ENCODE measurements at regions of chr5 and their contacts with region 1.

Region 1: GRCh38 chr5:73088026-73088425 is 32.3 kb upstream of the TMEM171 start:
- DNase-seq: no peak
- H3K4me3 ChIP-seq: no peak overlapping the region
- H3K27ac ChIP-seq: no peak overlapping the region
- H3K4me1 ChIP-seq: no peaks in the 10 kb centered on the region
- H3K27me3 ChIP-seq: no peaks in the 10 kb centered on the region
- CTCF ChIP-seq: no peak

Region 2: GRCh38 chr5:73170522-73170921 is 82.5 kb after region 1 on chr5:
- CTCF ChIA-PET with region 1: interaction called, 3 read pairs
- POLR2A ChIA-PET with region 1: no interaction called
- intact Hi-C with region 1: loop called (anchors 2 kb)
- DNase-seq: peak; percentile 68
- H3K4me3 ChIP-seq: no peak overlapping the region
- H3K27ac ChIP-seq: no peak overlapping the region
- H3K4me1 ChIP-seq: peaks cover 6% of the 10 kb centered on the region
- H3K27me3 ChIP-seq: no peaks in the 10 kb centered on the region
- CTCF ChIP-seq: peak; percentile 81

Region 3: DNA sequence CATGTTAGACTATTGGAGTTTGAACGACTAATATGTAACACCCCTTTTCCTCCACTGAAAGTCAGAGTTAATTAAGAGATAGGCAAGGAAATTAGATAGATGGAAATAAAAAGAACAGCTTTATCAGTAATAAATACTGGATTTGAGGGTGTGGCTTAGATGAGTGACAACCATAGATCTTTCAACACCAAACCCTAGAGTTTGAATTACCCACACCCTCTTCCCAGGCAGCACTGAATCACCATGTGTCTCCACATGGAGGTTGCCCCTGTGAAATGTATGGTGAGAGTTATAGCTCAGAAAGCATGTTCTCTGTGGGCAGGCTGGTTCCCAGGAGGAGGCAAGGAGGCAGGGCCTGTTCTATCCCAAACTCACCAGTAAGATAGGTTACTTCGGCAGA is 154.7 kb after region 1 on chr5:
- CTCF ChIA-PET with region 1: no interaction called
- POLR2A ChIA-PET with region 1: no interaction called
- intact Hi-C with region 1: no loop called
- DNase-seq: no peak
- H3K4me3 ChIP-seq: no peak overlapping the region
- H3K27ac ChIP-seq: no peak overlapping the region
- H3K4me1 ChIP-seq: no peaks in the 10 kb centered on the region
- H3K27me3 ChIP-seq: peaks cover 5% of the 10 kb centered on the region
- CTCF ChIP-seq: no peak

Region 4: DNA sequence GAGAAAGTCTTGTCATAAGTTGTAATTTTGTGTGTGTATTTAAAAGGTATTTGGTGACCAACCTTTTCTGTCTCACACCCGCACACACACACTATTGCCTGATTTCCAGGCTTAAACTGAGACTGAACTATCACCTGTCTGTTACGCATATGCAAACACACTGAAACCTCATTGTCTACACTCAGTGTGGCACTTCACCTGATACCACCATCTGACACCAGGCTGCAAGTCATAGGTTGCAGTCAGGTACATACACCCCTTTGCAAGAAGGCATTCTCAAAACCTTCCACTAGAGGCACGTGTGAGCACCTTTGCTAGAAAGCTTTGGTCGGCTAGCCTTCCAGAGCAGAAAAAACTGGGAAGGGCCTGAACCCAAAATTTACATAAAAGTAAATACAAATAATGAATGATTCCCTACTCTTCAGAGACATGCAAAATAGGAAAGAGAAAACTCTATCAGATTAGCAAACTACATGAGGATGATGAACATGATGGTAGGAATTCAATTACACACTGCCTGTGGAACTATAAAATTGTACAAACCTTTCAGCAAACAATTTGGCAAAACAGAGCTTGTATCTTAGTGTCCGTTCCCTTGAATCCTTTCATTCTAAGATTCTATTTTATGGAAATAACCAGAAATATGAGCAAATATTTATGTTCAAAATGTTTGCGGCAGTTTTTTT is 366.5 kb after region 1 on chr5:
- CTCF ChIA-PET with region 1: no interaction called
- POLR2A ChIA-PET with region 1: no interaction called
- intact Hi-C with region 1: loop called (anchors 2 kb)
- DNase-seq: peak; percentile 62
- H3K4me3 ChIP-seq: no peak overlapping the region
- H3K27ac ChIP-seq: no peak overlapping the region
- H3K4me1 ChIP-seq: peaks cover 2% of the 10 kb centered on the region
- H3K27me3 ChIP-seq: peaks cover 44% of the 10 kb centered on the region
- CTCF ChIP-seq: peak; percentile 74

Measured in A673 (cell line).